ENCODE measurements at regions of chr20 and their contacts with region 1.

Region 1: DNA sequence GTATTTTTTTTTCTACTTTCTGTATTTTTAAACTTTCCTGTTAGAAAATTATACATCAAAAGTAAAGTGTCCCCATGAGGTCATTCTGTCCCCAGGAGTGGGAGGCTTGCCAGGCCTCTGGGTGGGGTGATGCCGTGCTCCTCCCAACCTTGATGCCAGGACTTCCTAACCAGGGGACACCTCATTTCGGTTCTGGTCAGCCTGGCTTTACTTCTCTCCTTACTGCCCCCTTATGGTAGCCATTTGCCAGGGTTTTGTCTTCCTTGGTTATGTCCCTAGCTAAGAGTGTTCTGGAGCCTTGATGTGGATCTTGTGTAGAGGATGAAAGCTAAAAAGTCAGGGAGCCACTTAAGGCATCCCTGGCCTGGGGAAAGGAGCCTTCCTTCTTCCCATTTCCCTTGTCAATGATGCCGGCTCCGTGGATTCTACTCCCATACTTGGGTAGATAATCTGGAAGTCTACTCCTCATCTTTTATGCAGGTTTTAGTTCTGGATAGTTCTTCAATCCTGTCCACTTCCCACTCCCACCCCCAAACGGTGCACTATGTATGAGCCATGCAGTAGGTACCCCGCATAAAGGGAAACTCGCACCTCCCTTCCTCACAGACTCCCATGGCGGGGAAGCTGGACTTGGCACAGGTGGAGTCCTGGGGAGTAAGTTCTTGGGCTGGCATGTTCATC is 164.1 kb upstream of the SALL4 start:
- DNase-seq: no peak
- ATAC-seq: peak; percentile 44
- H3K4me3 ChIP-seq: no peak overlapping the region
- H3K27ac ChIP-seq: no peak overlapping the region
- H3K4me1 ChIP-seq: no peaks in the 10 kb centered on the region
- H3K27me3 ChIP-seq: no peaks in the 10 kb centered on the region

Region 2: GRCh38 chr20:51639206-51639832 is 327.1 kb before region 1 on chr20:
- intact Hi-C with region 1: loop called in 1 of 2 experiments (anchors 5 kb)
- DNase-seq: peak; percentile 73 to 89
- ATAC-seq: peak; percentile 68
- H3K4me3 ChIP-seq: no peak overlapping the region
- H3K27ac ChIP-seq: no peak overlapping the region
- H3K4me1 ChIP-seq: no peaks in the 10 kb centered on the region
- H3K27me3 ChIP-seq: no peaks in the 10 kb centered on the region

Region 3: GRCh38 chr20:51703400-51704287 is 262.8 kb before region 1 on chr20:
- intact Hi-C with region 1: loop called in 1 of 2 experiments (anchors 10 kb)
- DNase-seq: no peak
- ATAC-seq: no peak
- H3K4me3 ChIP-seq: no peak overlapping the region
- H3K27ac ChIP-seq: no peak overlapping the region
- H3K4me1 ChIP-seq: no peaks in the 10 kb centered on the region
- H3K27me3 ChIP-seq: no peaks in the 10 kb centered on the region

Region 4: DNA sequence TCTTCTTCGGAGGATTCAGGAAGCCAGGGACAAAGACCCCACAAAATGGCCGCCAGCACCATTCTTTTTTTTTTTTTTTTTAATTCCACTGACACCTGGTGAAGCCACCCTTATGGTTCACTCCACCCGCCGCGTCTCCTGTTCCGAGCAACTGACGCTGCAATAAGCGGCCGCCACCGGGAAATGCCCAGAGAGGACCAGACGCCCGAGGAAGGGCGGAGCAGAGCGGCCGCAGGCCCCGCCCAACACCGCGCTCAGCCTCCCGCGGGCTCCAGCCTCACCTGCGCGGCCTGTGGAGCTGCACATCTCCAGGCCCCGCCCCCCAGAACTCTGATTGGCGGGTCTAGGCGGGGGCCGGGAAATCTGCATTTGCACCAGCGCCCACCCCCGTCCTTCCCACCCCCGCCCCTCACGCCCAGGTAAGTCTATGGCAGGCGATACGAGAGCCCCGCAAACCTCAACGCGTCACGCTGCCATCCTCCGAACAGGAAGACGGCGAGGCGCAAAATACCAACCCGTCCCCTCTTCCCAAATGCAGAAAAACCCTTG is 199.3 kb before region 1 on chr20:
- intact Hi-C with region 1: no loop called
- DNase-seq: peak; percentile 73 to 89
- ATAC-seq: peak; percentile 82
- H3K4me3 ChIP-seq: peak overlapping the region; percentile 57 to 84
- H3K27ac ChIP-seq: no peak overlapping the region
- H3K4me1 ChIP-seq: no peaks in the 10 kb centered on the region
- H3K27me3 ChIP-seq: no peaks in the 10 kb centered on the region

Region 5: DNA sequence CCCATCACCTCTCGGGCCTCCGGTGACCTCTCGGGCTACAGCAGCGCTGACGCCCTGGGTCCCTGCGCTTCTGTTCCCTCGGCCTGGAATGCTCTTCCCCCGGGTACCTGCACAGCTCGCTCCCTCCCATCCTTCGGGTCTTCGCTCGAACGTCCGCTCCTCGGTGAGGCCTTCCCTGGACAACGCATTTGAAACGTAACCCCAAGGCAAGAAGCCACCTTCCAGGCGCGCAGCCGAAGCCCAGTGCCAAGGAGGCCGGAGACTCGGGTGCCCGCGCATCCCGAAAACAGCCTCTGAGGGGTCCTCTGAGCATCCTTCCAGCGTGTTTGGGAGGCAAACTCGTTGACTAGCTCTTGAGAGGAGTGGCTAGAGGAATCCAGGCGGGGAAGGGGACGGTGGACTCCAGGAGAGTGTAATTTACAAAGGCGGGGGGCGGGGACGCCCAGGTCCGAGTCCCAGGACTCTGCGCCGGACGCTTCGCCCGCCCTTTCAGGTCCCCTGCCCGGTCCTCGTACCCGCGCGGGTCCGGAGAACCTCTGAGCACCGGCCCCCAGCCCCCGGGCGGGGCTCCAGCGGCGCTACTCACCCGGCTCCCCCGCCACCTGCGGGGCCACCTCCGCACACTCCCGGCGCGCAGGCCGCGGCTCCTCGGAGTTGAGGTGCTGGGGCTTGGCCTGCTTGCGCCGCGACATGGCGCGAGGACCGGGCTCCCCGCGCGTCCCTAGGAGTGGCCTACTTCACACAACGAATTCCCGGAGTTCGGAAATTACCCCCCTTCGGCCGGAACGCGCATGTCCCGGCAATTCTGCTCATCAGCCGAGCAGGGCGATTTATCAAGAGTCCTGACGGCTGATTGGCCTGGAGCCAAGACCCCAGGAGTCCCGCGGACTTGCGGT is 138.4 kb after region 1 on chr20:
- intact Hi-C with region 1: no loop called
- DNase-seq: no peak
- ATAC-seq: peak; percentile 24
- H3K4me3 ChIP-seq: peak overlapping the region in 1 of 2 donors; percentile 11
- H3K27ac ChIP-seq: no peak overlapping the region
- H3K4me1 ChIP-seq: no peaks in the 10 kb centered on the region
- H3K27me3 ChIP-seq: no peaks in the 10 kb centered on the region